Sigmoid colon (tissue), 7 donors: ENCODE measurements at regions of chr19 and their contacts with region 1.

Region 1: DNA sequence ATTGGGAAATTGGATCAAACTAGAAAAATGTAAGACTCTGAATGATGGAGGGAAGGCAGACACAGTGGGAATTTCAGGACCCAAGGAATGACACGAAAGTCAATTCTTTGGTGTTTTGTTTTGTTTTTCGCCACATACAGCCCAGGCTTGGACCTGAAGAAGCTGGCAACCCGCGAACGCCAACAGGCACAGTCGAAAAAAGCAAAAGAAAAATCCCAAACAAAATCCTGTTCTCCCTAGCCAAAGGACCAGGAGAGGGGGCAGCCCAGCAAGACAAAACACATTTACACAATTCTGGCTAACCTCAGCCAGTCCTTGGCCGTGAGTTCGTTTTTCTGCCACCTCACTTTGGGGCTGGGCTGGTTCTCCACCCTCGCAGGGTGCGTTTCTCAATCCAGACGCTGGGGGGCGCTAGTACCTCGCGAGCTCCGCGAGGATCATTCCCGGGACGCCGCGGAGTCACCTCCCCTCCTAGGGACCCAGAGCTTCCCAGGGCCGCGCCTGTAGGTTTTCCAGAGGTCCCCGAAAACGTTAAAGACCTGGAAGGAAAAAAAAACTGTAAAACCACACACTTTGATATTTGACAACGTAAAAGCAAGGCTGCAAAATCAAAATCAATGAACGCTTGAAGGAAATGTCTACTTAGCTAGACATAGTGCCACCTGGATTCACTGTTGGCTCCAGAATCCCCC is 34.9 kb upstream of the TPM4 start:
- DNase-seq: peak; percentile 93
- H3K4me3 ChIP-seq: peak overlapping the region in 3 of 4 donors; percentile 17 to 37 (median 21)
- H3K27ac ChIP-seq: peak overlapping the region; percentile 29 to 63 (median 44)
- H3K4me1 ChIP-seq: peaks cover 0 to 13% (median 8%) of the 10 kb centered on the region in 4 donors
- H3K27me3 ChIP-seq: no peaks in the 10 kb centered on the region
- CTCF ChIP-seq: peak; percentile 96 to 99 (median 98)
- EP300 ChIP-seq: no peak
- POLR2A ChIP-seq: no peak

Region 2: DNA sequence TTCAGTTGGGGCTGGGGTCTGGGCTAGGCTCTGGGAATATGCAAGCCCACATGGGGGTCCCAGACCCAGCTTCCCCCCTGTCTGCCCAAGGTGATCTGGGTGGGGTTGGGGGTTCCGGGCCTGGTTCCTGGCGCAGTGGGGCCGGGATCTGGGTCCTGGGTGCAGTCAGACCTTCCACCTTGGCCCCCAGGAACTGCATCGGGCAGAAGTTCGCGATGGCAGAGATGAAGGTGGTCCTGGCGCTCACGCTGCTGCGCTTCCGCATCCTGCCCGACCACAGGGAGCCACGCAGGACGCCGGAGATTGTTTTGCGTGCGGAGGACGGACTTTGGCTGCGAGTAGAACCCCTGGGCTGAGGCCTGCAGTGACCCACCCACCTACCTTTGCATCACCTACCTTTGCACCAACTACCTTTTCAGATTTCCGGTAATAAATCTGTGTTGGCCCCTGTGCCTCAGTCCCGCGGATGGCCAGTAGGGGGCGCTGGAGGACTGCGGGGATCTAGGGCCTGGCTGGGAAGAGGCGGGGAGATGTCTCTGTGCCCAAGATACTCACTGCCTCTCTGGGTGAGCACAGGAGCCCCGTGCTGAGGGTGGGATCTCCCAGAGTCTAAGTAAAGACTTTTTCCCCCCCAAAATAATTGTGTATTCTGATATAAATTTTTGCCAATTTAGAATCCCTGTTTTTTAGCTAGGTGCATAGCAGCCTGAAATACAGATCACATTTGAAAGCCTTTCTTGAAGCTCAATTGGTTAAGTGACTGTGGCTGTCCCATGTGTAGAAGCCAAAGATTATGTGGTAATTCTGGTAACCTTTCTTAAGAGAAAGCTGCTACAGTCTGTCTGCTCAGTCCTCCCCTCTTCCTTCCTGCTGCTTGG is 412.2 kb before region 1 on chr19:
- intact Hi-C with region 1: loop called (anchors 5 kb)
- DNase-seq: peak; percentile 87
- H3K4me3 ChIP-seq: no peak overlapping the region
- H3K27ac ChIP-seq: no peak overlapping the region
- H3K4me1 ChIP-seq: peaks cover 0 to 5% (median 2%) of the 10 kb centered on the region in 4 donors
- H3K27me3 ChIP-seq: peaks cover 0 to 27% (median 7%) of the 10 kb centered on the region in 3 donors
- CTCF ChIP-seq: peak; percentile 90 to 98 (median 97)
- EP300 ChIP-seq: no peak
- POLR2A ChIP-seq: no peak

Region 3: GRCh38 chr19:16066611-16067104 is 25.2 kb after region 1 on chr19:
- intact Hi-C with region 1: loop called (anchors 2 kb)
- DNase-seq: no peak
- H3K4me3 ChIP-seq: peak overlapping the region in 3 of 4 donors; percentile 73 to 89 (median 82)
- H3K27ac ChIP-seq: peak overlapping the region; percentile 97 to 100 (median 100)
- H3K4me1 ChIP-seq: peaks cover 0 to 36% (median 28%) of the 10 kb centered on the region in 4 donors
- H3K27me3 ChIP-seq: no peaks in the 10 kb centered on the region
- CTCF ChIP-seq: peak in 3 of 4 experiments; percentile 14 to 30 (median 18)
- EP300 ChIP-seq: no peak
- POLR2A ChIP-seq: no peak

Region 4: GRCh38 chr19:16111160-16111908 is 69.9 kb after region 1 on chr19 and contains the start of gene RAB8A:
- intact Hi-C with region 1: loop called (anchors 1 kb)
- DNase-seq: peak; percentile 100
- H3K4me3 ChIP-seq: peak within 1 kb of the TSS; percentile 94 to 99 (median 94)
- H3K27ac ChIP-seq: peak within 1 kb of the TSS; percentile 91 to 96 (median 95)
- H3K4me1 ChIP-seq: peaks cover 0 to 49% (median 42%) of the 10 kb centered on the region in 4 donors
- H3K27me3 ChIP-seq: no peaks in the 10 kb centered on the region
- CTCF ChIP-seq: peak; percentile 89 to 98 (median 96)
- EP300 ChIP-seq: no peak
- POLR2A ChIP-seq: no peak
- total RNA-seq, gene RAB8A: 32.8 to 43.9 (median 34.9) TPM

Region 5: DNA sequence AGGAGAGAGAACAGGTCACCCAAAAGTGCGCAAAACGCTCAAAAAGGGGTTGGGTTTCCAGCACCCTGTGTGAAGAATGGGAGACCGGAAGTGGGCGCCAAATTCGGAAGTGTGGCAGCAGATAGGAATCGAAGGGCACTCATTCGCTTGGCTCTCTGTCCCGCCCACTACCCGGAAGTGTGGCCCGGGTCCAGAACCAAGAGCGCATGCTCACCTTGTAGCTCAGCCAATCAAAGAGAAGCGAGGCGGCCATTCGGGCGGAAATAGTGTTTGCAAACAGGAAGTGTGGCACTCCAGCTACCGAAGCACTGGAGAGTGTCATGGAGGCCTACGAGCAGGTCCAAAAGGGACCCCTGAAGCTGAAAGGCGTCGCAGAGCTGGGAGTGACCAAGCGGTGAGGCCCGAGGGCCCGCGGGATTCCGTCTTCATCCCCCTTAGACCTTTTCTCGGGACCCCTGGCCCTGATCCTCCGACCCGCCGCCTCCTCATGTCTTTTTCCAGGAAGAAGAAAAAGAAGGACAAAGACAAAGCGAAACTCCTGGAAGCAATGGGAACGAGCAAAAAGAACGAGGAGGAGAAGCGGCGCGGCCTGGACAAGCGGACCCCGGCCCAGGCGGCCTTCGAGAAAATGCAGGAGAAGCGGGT is 143.8 kb after region 1 on chr19 and contains the start of gene FAM32A:
- intact Hi-C with region 1: loop called (anchors 1 kb)
- DNase-seq: peak; percentile 100
- H3K4me3 ChIP-seq: peak within 1 kb of the TSS; percentile 81 to 90 (median 83)
- H3K27ac ChIP-seq: peak within 1 kb of the TSS; percentile 83 to 87 (median 84)
- H3K4me1 ChIP-seq: peaks cover 0 to 25% (median 21%) of the 10 kb centered on the region in 4 donors
- H3K27me3 ChIP-seq: no peaks in the 10 kb centered on the region
- CTCF ChIP-seq: no peak
- EP300 ChIP-seq: no peak
- POLR2A ChIP-seq: peak; percentile 74 to 78
- total RNA-seq, gene FAM32A: 86.9 to 97.7 (median 92.5) TPM

Region 6: DNA sequence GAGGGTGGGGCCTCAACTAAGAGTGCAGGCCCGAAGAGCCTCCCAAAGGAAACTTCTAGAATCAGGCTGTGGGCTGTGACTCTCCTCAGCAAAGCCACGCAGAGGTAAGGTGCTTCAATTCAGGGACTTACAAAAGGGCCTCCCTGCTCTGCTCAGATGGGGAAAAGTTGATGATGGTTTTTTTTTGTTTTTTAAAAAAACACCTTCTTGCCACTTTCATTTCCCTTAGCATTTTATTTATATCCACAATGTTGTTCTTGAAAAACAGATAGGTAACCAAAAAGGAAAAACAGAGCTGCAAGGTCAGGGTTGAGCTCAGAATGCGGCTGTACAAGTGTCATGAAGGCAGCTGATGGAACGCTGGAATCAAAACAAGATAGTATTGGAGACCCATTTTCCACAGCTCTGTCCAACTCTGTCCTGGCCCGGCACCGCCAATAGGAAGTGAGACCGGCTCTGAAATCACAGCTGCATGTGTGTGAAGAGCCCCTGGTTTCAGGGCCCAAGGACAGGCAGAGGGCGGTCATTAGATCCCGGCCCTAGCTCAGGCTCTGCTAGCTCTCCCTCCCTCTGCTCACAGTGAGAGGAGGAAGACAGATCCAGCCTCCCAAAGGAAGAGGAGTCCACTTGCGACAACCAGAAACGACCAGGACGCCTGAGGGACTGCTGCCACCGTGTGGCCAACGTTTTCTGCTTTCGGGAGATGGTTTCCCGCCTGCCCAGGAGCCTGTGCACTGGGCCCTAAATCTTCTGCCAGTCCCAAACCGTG is 341.5 kb after region 1 on chr19:
- intact Hi-C with region 1: loop called (anchors 5 kb)
- DNase-seq: peak; percentile 95
- H3K4me3 ChIP-seq: no peak overlapping the region
- H3K27ac ChIP-seq: peak overlapping the region; percentile 79 to 91 (median 86)
- H3K4me1 ChIP-seq: peaks cover 0 to 33% (median 29%) of the 10 kb centered on the region in 4 donors
- H3K27me3 ChIP-seq: no peaks in the 10 kb centered on the region
- CTCF ChIP-seq: peak; percentile 80 to 86 (median 82)
- EP300 ChIP-seq: no peak
- POLR2A ChIP-seq: no peak